ENCODE measurements at regions of chr9 and their contacts with region 1.

Region 1: DNA sequence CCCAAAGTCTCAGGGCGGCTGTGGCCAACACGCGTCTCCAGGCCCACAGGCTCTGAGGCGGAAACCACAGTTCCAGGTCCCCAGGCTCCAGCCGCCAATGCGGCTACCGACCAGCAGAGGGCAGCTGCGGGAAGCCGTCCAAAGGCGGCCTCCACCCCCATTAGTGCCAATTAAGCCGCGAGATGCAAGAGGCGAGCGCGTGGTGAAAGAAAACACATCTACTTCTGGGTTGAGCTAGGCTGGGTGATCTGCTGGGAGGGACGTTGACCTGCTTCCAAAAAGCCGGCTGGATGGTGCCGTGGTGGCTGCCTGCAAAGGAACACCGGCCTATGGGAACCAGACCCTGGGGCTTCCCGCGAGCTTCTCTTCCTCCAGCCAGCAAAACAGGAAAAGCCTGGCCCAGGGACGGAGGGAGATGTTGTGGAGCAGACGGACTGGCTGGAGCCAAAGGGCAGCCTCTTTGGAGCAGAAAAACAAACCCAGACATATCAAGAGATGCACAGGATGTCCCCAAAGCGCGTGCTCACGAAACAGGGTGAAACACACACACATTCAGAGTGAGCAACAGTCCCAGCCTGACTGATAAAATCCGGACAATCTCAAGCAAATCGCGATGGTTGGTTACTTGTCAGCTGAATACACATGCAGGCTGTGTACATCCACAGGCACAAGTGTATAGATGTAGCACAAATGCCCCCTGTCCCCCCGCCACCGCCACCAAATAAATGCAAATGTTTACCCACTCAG is 187.1 kb upstream of the BRINP1 start:
- DNase-seq: peak; percentile 75 to 85
- H3K4me3 ChIP-seq: peak overlapping the region; percentile 36 to 43
- H3K27ac ChIP-seq: peak overlapping the region; percentile 44 to 48
- H3K4me1 ChIP-seq: peaks cover 0 to 12% (median 3%) of the 10 kb centered on the region in 4 donors
- H3K27me3 ChIP-seq: no peaks in the 10 kb centered on the region
- CTCF ChIP-seq: peak; percentile 89 to 95

Region 2: DNA sequence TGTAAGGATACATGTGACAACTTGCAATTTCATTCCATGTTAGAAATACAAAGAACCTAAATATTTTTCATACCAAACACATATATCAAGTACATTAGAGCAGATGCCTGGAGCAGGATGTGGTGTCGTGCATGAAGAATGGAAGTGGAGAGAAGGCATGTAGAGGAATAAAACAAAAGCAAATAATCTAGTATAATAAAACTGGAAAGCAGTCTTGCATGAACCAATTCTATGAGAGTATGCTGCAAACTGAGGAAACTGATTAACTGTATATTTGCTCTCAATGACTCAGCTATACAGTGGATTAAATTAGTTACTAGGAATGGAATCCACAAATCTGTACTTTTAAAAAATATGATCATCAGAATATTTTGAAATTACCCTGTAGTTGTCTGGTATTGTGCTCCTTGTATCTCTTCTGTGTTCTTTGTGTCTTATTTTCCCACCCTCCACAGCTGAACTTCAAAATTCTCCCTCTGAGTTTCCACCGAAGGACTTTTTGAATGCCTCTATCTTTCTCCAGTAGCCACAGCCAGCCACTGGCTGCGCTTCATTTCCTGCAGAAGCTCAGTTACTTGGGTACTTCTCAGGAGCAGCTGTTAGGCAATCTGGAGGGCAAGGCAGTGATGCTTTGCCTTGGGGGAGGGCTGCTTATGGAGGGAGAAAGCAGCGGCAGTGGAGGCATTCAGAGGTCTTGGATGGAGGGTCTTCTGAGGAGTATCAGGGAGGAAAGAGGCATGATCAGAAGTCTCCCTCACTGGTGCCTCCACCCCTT is 795.1 kb before region 1 on chr9:
- intact Hi-C with region 1: no loop called
- DNase-seq: no peak
- H3K4me3 ChIP-seq: no peak overlapping the region
- H3K27ac ChIP-seq: no peak overlapping the region
- H3K4me1 ChIP-seq: no peaks in the 10 kb centered on the region
- H3K27me3 ChIP-seq: no peaks in the 10 kb centered on the region
- CTCF ChIP-seq: no peak

Region 3: DNA sequence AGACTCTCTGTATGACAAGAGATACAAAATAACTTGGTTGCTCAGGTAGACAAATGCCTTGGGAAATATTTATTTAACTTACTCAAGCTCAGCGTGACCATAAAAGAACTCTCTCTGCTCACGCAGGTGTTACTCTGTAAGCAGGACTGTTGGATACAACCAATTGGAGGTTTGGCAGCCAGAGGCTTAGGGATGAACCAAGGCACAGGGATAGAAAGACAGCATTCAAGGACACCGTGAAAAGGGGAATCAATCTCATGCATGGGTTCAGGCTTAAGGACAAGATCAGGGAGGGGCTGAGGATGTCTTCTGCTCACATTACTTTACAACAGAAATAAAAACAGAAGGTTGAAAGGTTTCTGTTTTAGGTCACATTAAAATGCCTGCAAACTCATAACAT is 201.9 kb after region 1 on chr9:
- intact Hi-C with region 1: no loop called
- DNase-seq: no peak
- H3K4me3 ChIP-seq: no peak overlapping the region
- H3K27ac ChIP-seq: no peak overlapping the region
- H3K4me1 ChIP-seq: no peaks in the 10 kb centered on the region
- H3K27me3 ChIP-seq: no peaks in the 10 kb centered on the region
- CTCF ChIP-seq: no peak

Region 4: DNA sequence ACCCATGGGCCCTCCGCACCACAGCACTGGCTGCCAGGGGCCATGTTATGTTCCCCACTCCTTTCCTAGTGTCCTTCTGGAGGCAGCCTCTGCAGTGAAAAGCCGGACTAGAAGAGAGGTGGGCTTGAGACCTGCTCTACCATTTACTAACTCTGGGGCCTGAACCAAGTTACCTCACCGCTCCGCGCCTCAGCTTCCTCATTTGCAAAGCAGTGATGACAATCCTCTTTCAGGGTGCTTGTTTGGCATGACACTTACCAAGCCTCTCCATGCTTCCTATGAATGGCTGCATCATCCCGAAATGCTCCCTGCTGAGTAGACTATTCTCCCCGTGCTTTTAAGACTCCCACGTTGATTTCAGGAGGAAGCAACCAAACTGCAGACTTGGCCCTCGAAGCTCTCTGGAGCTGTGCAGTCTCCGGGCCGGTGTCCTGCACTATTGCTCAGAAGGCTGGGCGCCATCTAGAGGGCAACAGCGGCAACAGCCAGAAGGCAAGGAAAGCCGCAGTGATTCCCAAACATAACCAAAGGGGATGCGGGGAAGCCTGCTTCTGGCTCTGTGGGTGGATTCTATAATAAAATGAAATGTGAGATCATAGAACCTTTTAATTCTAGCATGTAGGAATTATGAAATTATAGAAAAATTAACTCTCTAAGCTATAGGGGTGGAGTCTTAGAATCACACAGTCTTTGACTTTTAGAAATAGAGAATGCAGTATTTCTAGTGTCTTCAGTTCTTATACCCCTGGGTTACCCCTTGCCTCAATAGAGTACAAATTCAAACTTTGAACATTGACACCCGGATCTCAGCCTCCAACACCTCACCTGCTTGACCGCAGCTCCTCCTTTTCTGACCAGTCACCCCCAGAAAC is 412.8 kb after region 1 on chr9:
- intact Hi-C with region 1: loop called (anchors 2 kb)
- DNase-seq: peak; percentile 82 to 87
- H3K4me3 ChIP-seq: no peak overlapping the region
- H3K27ac ChIP-seq: no peak overlapping the region
- H3K4me1 ChIP-seq: peaks cover 0 to 15% (median 3%) of the 10 kb centered on the region in 4 donors
- H3K27me3 ChIP-seq: no peaks in the 10 kb centered on the region
- CTCF ChIP-seq: peak; percentile 85 to 94

Measured in tibial artery (tissue), 4 donors.